ENCODE measurements at regions of chr7 and their contacts with region 1.

Region 1: DNA sequence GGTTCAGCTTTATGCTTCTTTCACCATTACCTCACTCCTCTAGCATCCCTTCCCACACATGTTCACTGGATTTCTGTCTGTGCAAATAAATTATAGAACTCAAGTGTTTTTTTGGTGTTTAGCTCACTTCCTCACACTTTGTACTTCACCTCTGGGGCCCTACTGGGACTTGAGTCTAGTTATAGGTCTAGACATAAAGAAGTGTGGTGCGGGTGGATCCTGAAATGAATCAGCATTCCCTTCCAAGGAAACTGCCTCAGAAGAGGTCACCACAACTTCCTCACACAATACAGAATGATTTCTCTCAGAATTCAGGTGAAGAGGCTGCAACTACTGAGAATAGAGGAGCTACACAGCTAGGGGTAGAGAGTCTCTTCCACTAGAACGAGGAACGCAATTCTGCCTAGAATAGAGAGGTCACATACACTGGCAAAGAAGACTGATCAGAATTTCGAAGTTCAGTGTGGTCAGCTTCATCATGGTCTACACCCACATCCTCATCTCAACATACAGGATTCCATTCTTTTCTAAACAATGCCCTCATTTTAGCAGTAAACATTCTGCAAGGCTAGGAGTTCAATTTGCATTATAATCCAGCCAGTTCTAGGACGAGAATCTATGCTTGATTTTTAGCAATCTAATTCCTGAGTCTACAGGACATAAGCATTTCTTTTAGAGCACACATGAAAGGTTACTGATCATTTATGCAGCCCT is 938.7 kb upstream of the PHF14 start:
- DNase-seq: no peak
- ATAC-seq: no peak
- H3K4me3 ChIP-seq: no peak overlapping the region
- H3K4me3 Mint-ChIP-seq: no peak overlapping the region
- H3K27ac ChIP-seq: no peak overlapping the region
- H3K27ac Mint-ChIP-seq: no peak overlapping the region
- H3K4me1 ChIP-seq: no peaks in the 10 kb centered on the region
- H3K4me1 Mint-ChIP-seq: no peaks in the 10 kb centered on the region
- H3K27me3 ChIP-seq: no peaks in the 10 kb centered on the region
- H3K27me3 Mint-ChIP-seq: no peaks in the 10 kb centered on the region
- CTCF ChIP-seq: no peak

Region 2: GRCh38 chr7:9961161-9961923 is 73.7 kb before region 1 on chr7:
- CTCF ChIA-PET with region 1: no interaction called
- POLR2A ChIA-PET with region 1: no interaction called
- intact Hi-C with region 1: loop called in 1 of 2 experiments (anchors 2 kb)
- DNase-seq: no peak
- ATAC-seq: no peak
- H3K4me3 ChIP-seq: no peak overlapping the region
- H3K4me3 Mint-ChIP-seq: no peak overlapping the region
- H3K27ac ChIP-seq: no peak overlapping the region
- H3K27ac Mint-ChIP-seq: no peak overlapping the region
- H3K4me1 ChIP-seq: no peaks in the 10 kb centered on the region
- H3K4me1 Mint-ChIP-seq: no peaks in the 10 kb centered on the region
- H3K27me3 ChIP-seq: no peaks in the 10 kb centered on the region
- H3K27me3 Mint-ChIP-seq: no peaks in the 10 kb centered on the region
- CTCF ChIP-seq: no peak